Ovary (tissue), 10 donors: ENCODE measurements at regions of chr14 and their contacts with region 1.

Region 1: GRCh38 chr14:89165189-89166181 is 251.5 kb downstream of the FOXN3 start:
- DNase-seq: no peak
- H3K4me3 ChIP-seq: no peak overlapping the region
- H3K27ac ChIP-seq: no peak overlapping the region
- H3K4me1 ChIP-seq: peaks cover 4% of the 10 kb centered on the region
- H3K27me3 ChIP-seq: no peaks in the 10 kb centered on the region
- CTCF ChIP-seq: no peak
- EP300 ChIP-seq: no peak
- POLR2A ChIP-seq: no peak

Region 2: GRCh38 chr14:89625244-89625713 is 459.8 kb after region 1 on chr14:
- intact Hi-C with region 1: loop called in 1 of 4 experiments (anchors 10 kb)
- DNase-seq: peak; percentile 84 to 91 (median 90)
- H3K4me3 ChIP-seq: no peak overlapping the region
- H3K27ac ChIP-seq: peak overlapping the region in 1 of 2 donors; percentile 70
- H3K4me1 ChIP-seq: peaks cover 13% of the 10 kb centered on the region
- H3K27me3 ChIP-seq: no peaks in the 10 kb centered on the region
- CTCF ChIP-seq: no peak
- EP300 ChIP-seq: no peak
- POLR2A ChIP-seq: no peak